K562 (cell line): ENCODE measurements at regions of chr16 and their contacts with region 1.

Region 1: DNA sequence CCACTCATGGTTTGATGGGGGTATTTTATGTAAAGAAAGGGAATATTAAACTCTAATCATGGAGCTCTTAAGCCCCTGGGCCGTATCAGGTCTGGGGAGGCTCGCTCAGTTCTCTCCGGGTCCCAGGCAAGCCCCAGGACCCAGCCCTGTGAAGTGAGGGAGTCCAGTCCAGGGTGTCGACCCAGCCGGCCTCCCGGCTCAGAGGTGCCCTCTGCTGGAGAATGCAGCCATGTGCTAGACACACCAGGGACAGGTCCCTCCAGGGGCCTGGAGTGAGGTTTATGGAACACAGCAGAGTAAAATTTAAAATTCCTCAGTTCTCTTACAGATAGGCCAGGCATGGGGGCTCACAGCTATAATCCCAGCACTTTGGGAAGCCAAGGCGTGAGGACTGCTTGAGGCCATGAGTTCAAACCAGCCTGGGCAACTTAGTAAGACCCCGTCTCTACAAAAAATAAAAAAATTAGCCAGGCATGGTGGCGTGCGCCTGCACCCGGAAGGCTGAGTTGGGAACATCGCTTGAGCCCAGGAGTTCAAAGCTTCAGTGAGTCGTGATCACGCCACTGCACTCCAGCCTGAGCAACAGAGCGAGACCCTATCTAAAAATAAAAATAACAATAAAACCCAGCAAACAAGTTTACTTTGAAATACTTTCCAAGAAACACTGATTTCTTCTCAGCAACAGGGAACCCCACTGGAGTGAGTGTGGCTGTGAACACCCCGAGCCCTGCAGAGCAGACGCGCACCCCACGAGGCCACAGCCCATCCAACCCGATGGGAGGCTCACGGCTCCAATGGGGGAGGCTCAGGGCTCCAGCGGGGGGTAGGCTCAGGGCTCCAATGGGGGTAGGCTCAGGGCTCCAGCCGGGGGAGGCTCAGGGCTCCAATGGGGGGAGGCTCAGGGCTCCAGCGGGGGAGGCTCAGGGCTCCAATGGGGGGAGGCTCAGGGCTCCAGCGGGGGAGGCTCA is 72.2 kb downstream of the ZNF778 start:
- DNase-seq: peak; percentile 84 to 93 (median 88)
- ATAC-seq: peak; percentile 94
- H3K4me3 ChIP-seq: no peak overlapping the region
- H3K27ac ChIP-seq: no peak overlapping the region
- H3K4me1 ChIP-seq: peaks cover 8 to 45% of the 10 kb centered on the region in 2 experiments; a peak in 4 of 5 replicates
- H3K27me3 ChIP-seq: no peaks in the 10 kb centered on the region
- CTCF ChIP-seq: peak; percentile 86 to 88 (median 87)
- EP300 ChIP-seq: no peak
- POLR2A ChIP-seq: no peak
- RAD21 ChIP-seq: peak; percentile 30 to 57

Region 2: DNA sequence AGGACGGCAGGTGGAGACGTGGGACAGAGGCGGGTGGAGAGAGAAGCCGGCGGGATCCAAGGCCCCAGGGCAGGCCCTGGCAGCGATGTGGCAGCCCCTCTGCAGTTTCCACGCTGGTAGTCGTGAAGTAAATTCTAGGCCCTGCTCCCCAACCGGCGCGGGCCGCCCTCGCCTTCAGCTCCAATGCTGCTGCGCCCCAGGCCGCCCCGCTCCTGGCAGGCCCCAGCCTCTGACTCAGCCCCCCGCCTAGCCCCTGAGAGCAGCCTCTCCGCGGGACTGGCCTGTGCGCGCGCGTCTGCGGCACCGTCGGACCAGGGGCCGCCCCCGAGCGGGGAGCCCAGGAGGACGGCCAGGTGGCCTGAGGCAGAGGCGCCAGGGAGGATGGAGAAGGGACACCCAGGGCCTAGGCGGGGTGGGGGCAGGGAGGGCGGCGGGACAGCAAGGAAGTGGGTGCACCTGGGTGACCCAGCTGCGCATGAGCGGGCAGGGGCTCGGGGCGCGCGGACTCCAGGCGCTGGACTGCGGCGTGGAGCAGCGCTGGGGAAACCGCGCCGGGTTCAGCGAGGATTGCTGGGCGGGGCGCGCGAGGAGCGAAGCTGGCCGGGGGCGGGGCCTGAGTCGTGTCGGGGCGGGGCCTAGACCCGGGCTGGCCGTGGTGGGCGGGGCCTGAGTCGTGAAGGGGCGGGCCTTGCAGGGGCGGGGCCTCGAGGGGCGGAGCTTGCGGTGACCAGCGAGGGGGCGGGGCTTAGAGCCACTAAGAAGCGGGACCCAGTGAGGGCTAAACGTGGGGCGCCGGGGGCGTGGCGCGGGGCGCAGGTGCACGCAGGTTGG is 42.6 kb before region 1 on chr16:
- CTCF ChIA-PET with region 1: no interaction called
- POLR2A ChIA-PET with region 1: no interaction called
- in situ Hi-C with region 1: no loop called
- intact Hi-C with region 1: loop called (anchors 2 kb)
- DNase-seq: peak; percentile 88 to 100 (median 100)
- ATAC-seq: peak; percentile 99
- H3K4me3 ChIP-seq: peak overlapping the region; percentile 56
- H3K27ac ChIP-seq: peak overlapping the region; percentile 59; the same call in 1 of the 3 replicates
- H3K4me1 ChIP-seq: peaks cover 0 to 35% of the 10 kb centered on the region in 2 experiments; a peak in 3 of 5 replicates
- H3K27me3 ChIP-seq: no peaks in the 10 kb centered on the region
- CTCF ChIP-seq: no peak
- EP300 ChIP-seq: no peak
- POLR2A ChIP-seq: peak; percentile 26; the same call in 1 of the 2 replicates
- RAD21 ChIP-seq: no peak

Region 3: GRCh38 chr16:89303617-89304016 is 13.9 kb after region 1 on chr16:
- CTCF ChIA-PET with region 1: no interaction called
- POLR2A ChIA-PET with region 1: interaction called, 14 read pairs
- in situ Hi-C with region 1: no loop called
- intact Hi-C with region 1: no loop called
- DNase-seq: no peak
- ATAC-seq: no peak
- H3K4me3 ChIP-seq: no peak overlapping the region
- H3K27ac ChIP-seq: no peak overlapping the region
- H3K4me1 ChIP-seq: peaks cover 0 to 34% of the 10 kb centered on the region in 2 experiments; a peak in 2 of 5 replicates
- H3K27me3 ChIP-seq: no peaks in the 10 kb centered on the region
- CTCF ChIP-seq: no peak
- EP300 ChIP-seq: no peak
- POLR2A ChIP-seq: no peak
- RAD21 ChIP-seq: no peak

Region 4: DNA sequence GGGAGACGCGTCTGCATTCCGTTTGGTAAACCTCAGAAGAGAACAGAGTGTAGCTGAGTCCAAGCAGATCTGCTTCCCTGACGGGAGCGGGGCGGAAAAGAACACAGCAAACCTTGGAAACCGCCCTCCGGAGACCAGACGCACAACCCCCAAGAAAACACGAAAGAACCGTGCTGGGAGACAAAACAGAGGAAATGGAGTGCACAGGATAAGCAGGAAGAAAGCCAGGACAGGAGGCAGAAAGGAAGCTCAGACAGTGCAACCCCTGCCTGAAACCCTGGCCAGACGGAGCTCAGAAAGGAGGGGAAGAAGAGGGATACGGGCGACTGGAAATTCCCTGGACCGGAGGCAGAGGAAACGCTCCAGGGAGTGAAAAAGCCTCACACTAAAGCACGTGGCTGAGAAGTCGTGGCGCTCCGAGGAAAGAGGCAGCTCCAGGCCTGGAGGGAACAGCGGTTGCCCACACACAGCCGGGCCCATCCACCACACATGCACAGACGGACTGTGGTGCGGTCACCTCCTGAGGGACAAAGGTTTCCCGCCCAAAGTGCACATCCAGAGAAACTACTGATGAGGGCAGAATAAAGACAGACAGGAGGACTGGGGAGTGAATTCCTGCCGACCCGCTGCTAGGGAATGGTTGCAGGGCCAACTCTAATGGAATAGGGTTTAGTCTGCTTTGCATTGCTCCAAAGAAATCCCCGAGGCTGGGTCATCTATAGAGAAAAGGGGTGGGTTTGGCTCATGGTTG is 334.0 kb after region 1 on chr16:
- CTCF ChIA-PET with region 1: no interaction called
- POLR2A ChIA-PET with region 1: no interaction called
- in situ Hi-C with region 1: no loop called
- intact Hi-C with region 1: no loop called
- DNase-seq: no peak
- ATAC-seq: peak; percentile 53
- H3K4me3 ChIP-seq: no peak overlapping the region
- H3K27ac ChIP-seq: no peak overlapping the region
- H3K4me1 ChIP-seq: peaks cover 0 to 29% of the 10 kb centered on the region in 2 experiments; a peak in 2 of 5 replicates
- H3K27me3 ChIP-seq: peaks cover 40 to 68% of the 10 kb centered on the region in 2 experiments
- CTCF ChIP-seq: no peak
- EP300 ChIP-seq: no peak
- POLR2A ChIP-seq: no peak
- RAD21 ChIP-seq: no peak